Activated CD4-positive, alpha-beta memory T cell treated with anti-CD3 and anti-CD28 coated beads for 36 hours (primary cell): ENCODE measurements at regions of chr1 and their contacts with region 1.

Region 1: GRCh38 chr1:31931593-31932225 is 6.5 kb downstream of the PTP4A2 start:
- DNase-seq: no peak
- H3K4me3 Mint-ChIP-seq: peak overlapping the region; percentile 41
- H3K27ac Mint-ChIP-seq: peak overlapping the region; percentile 96
- H3K4me1 Mint-ChIP-seq: peaks cover 89% of the 10 kb centered on the region
- H3K27me3 Mint-ChIP-seq: no peaks in the 10 kb centered on the region

Region 2: GRCh38 chr1:31843506-31843905 is 88.2 kb before region 1 on chr1:
- CTCF ChIA-PET with region 1: no interaction called
- POLR2A ChIA-PET with region 1: no interaction called
- intact Hi-C with region 1: no loop called
- DNase-seq: no peak
- H3K4me3 Mint-ChIP-seq: no peak overlapping the region
- H3K27ac Mint-ChIP-seq: no peak overlapping the region
- H3K4me1 Mint-ChIP-seq: peaks cover 27% of the 10 kb centered on the region
- H3K27me3 Mint-ChIP-seq: no peaks in the 10 kb centered on the region

Region 3: GRCh38 chr1:31910933-31911332 is 20.8 kb before region 1 on chr1:
- CTCF ChIA-PET with region 1: interaction called, 7 read pairs
- POLR2A ChIA-PET with region 1: interaction called, 9 read pairs
- intact Hi-C with region 1: loop called (anchors 1 kb)
- DNase-seq: peak; percentile 49
- H3K4me3 Mint-ChIP-seq: no peak overlapping the region
- H3K27ac Mint-ChIP-seq: peak overlapping the region; percentile 69
- H3K4me1 Mint-ChIP-seq: peaks cover 51% of the 10 kb centered on the region
- H3K27me3 Mint-ChIP-seq: no peaks in the 10 kb centered on the region

Region 4: GRCh38 chr1:31944205-31945089 is 12.7 kb after region 1 on chr1:
- CTCF ChIA-PET with region 1: interaction called, 22 read pairs
- POLR2A ChIA-PET with region 1: interaction called, 14 read pairs
- intact Hi-C with region 1: loop called (anchors 2 kb)
- DNase-seq: peak; percentile 89
- H3K4me3 Mint-ChIP-seq: peak overlapping the region; percentile 76
- H3K27ac Mint-ChIP-seq: peak overlapping the region; percentile 91
- H3K4me1 Mint-ChIP-seq: peaks cover 51% of the 10 kb centered on the region
- H3K27me3 Mint-ChIP-seq: no peaks in the 10 kb centered on the region